ENCODE measurements at regions of chr6 and their contacts with region 1.

Region 1: DNA sequence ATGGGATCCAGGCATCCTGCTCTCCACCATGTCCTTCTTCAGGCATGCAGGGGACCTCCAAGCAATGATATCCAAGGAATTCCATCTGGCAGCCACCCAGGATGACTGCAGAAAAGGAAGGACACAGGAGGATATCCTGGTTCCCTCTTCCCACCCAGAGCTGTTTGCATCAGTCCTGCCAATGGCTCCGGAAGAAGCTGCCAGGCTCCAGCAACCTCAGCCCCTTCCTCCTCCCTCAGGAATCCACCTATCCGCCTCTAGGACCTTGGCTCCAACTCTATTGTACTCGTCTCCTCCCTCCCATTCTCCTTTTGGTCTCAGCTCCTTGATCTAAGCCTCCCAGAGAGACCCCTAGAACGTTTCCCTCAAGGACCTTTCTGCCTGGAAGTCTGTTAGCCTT is 733 bp upstream of the PSORS1C2 start:
- DNase-seq: no peak
- H3K4me3 ChIP-seq: no peak overlapping the region
- H3K27ac ChIP-seq: no peak overlapping the region
- H3K4me1 ChIP-seq: peaks cover 0 to 5% of the 10 kb centered on the region in 2 donors
- H3K27me3 ChIP-seq: no peaks in the 10 kb centered on the region
- CTCF ChIP-seq: no peak
- POLR2A ChIP-seq: no peak

Region 2: GRCh38 chr6:31366693-31367470 is 227.3 kb after region 1 on chr6:
- intact Hi-C with region 1: loop called (anchors 2 kb)
- DNase-seq: peak; percentile 79 to 85
- H3K4me3 ChIP-seq: no peak overlapping the region
- H3K27ac ChIP-seq: no peak overlapping the region
- H3K4me1 ChIP-seq: no peaks in the 10 kb centered on the region
- H3K27me3 ChIP-seq: no peaks in the 10 kb centered on the region
- CTCF ChIP-seq: peak; percentile 87 to 93 (median 90)
- POLR2A ChIP-seq: no peak